ENCODE measurements at regions of chr12 and their contacts with region 1.

Region 1: DNA sequence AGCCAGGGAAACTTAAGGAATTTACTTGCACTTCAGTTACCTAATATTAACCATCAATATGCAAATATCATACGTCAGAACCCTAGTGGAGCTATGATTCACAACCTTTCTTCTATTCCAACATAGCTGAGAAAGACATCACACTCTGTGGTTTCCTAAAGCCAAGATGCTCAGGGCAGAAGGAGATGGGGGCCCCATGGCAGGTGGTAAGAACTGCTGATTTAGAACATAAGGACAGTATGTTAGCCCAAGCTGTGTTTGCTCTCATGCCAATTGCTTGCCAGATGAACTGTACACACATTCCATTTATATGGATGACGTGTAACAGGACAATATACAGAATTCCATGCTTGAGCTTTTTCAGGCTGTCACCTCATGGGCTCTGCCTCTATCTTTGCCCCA is 34.6 kb downstream of the HECTD4 start:
- DNase-seq: no peak
- H3K4me3 ChIP-seq: no peak overlapping the region
- H3K27ac ChIP-seq: no peak overlapping the region
- H3K4me1 ChIP-seq: no peaks in the 10 kb centered on the region
- H3K27me3 ChIP-seq: no peaks in the 10 kb centered on the region
- CTCF ChIP-seq: no peak

Region 2: GRCh38 chr12:112219195-112219594 is 128.4 kb before region 1 on chr12:
- CTCF ChIA-PET with region 1: interaction called, 10 read pairs
- POLR2A ChIA-PET with region 1: no interaction called
- intact Hi-C with region 1: no loop called
- DNase-seq: no peak
- H3K4me3 ChIP-seq: no peak overlapping the region
- H3K27ac ChIP-seq: no peak overlapping the region
- H3K4me1 ChIP-seq: no peaks in the 10 kb centered on the region
- H3K27me3 ChIP-seq: no peaks in the 10 kb centered on the region
- CTCF ChIP-seq: no peak

Region 3: DNA sequence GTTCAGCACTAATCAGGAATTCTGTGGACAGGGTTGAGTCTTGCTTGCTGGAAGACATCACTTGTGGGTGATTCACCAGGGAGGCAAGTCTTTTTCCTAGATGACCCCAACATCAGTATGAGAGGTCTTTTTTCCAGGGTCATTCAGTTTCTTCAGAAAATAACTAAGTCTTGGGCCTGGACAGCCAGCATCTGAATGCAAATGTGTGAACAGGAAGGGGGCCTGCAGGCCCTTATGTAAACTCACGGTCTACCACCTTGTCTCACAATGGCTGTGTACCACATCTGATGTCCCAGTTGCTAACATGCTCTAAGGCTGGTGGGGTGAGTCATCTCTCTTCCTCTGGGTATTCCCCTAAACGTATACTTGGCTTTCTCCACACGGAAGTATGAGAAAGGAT is 44.6 kb before region 1 on chr12:
- CTCF ChIA-PET with region 1: no interaction called
- POLR2A ChIA-PET with region 1: no interaction called
- intact Hi-C with region 1: no loop called
- DNase-seq: peak; percentile 7 to 42
- H3K4me3 ChIP-seq: no peak overlapping the region
- H3K27ac ChIP-seq: no peak overlapping the region
- H3K4me1 ChIP-seq: no peaks in the 10 kb centered on the region
- H3K27me3 ChIP-seq: no peaks in the 10 kb centered on the region
- CTCF ChIP-seq: no peak

Region 4: GRCh38 chr12:112314981-112315380 is 32.6 kb before region 1 on chr12:
- CTCF ChIA-PET with region 1: no interaction called
- POLR2A ChIA-PET with region 1: interaction called, 11 read pairs
- intact Hi-C with region 1: no loop called
- DNase-seq: no peak
- H3K4me3 ChIP-seq: no peak overlapping the region
- H3K27ac ChIP-seq: no peak overlapping the region
- H3K4me1 ChIP-seq: no peaks in the 10 kb centered on the region
- H3K27me3 ChIP-seq: no peaks in the 10 kb centered on the region
- CTCF ChIP-seq: no peak